Right ventricle myocardium inferior (tissue), 1 donor: ENCODE measurements at regions of chr14 and their contacts with region 1.

Region 1: GRCh38 chr14:68862954-68863594 is 70.2 kb upstream of the ZFP36L1 start:
- DNase-seq: peak; percentile 80
- ATAC-seq: peak; percentile 48

Region 2: GRCh38 chr14:69002069-69002468 is 139.0 kb after region 1 on chr14:
- intact Hi-C with region 1: loop called (anchors 2 kb)
- DNase-seq: no peak
- ATAC-seq: peak; percentile 90

Region 3: GRCh38 chr14:69107407-69108003 is 244.4 kb after region 1 on chr14:
- intact Hi-C with region 1: loop called (anchors 5 kb)
- DNase-seq: no peak
- ATAC-seq: peak; percentile 34